ENCODE measurements at regions of chr3 and their contacts with region 1.

Region 1: DNA sequence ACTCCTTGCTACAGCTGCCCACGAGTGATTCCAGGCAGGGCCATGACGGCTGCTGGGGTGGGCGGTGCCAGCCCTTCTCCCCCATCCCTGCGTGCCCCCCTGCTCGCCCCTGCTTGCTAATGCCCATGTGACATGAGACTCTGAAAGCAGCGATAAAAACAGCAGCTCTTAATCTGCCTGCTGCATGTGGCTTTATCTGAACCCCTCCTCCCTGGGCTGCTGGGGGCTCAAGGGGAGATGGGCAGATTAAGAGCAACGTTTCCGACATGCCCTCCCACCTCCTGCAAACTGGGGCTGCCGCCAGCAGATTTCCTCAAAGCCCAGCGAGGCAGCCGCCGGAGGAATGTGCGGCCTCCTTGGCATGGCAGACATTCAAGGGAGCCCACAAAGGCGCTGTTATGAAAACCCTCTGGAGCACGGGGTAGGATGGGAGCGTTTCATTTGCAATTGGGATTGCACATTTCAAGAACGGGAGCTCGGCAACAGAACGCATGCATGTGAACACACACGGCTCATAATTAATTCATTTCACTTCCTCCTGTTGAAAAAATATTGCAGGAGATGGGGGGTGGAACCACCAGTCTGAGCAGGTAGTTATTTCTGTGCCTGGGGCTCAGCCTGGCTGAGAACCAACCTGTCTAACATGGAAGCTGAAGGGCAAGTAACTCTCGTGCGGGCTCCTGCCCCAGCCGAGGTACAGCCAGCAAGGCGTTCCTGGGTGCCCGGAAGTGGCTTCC is 504.2 kb upstream of the PROK2 start:
- DNase-seq: peak in 8 of 10 donors; percentile 6 to 39 (median 25)
- ATAC-seq: peak; percentile 71 to 72
- H3K4me3 Mint-ChIP-seq: peak overlapping the region; percentile 81 to 91 (median 88)
- H3K27ac Mint-ChIP-seq: peak overlapping the region in 9 of 10 donors; percentile 17 to 84 (median 75)
- H3K4me1 Mint-ChIP-seq: peaks cover 13 to 22% (median 18%) of the 10 kb centered on the region in 4 donors
- H3K27me3 Mint-ChIP-seq: peaks cover 0 to 9% (median 0%) of the 10 kb centered on the region in 5 donors

Region 2: DNA sequence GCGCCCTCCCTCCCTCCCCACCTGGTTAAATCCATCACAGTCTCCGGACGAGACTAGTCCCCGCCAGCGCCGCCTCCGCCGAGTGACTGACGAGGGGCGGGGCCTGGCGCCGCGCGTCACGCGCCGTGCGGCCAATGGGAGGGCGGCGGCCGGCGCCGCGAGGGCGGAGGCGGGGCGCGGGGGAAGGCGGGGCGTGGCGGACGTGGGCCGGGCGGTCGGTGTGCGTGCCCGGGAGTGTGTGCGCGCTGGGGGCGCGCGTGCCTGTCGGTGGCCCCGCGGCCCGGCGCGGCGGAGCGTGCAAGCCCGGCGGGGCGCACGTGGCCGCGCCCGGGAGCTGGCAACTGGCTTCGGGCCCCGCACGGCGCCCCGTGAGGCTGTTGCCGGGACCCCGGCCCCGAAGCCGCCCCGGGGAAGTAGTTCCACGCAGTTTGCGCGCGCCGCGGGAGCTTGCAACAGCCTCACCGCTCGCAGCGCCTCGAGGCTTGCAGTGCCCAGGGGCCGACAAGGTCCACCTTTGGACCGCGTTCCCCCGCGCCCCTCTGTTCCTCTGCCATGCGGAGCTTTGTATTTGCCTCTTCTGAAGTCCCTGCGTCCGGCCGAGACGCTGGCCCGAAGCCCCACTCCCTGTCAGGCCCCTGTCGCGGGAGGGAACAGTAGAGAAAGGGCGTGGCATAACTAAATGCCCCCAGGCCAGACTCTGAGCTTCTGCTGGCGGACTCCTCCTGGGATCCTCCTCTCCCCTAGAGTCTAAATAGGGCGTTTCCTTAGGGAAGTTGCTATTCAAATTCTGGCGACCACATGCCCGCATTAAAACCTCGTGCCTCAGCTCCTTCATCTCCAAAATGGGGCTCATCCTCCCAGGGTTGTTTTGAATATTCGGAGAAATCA is 158.2 kb after region 1 on chr3:
- POLR2A ChIA-PET with region 1: interaction called, 10 read pairs
- DNase-seq: peak; percentile 88 to 98 (median 94)
- ATAC-seq: peak; percentile 85 to 89
- H3K4me3 Mint-ChIP-seq: peak overlapping the region; percentile 68 to 96 (median 76)
- H3K27ac Mint-ChIP-seq: peak overlapping the region in 9 of 10 donors; percentile 25 to 81 (median 68)
- H3K4me1 Mint-ChIP-seq: peaks cover 35 to 42% (median 38%) of the 10 kb centered on the region in 4 donors
- H3K27me3 Mint-ChIP-seq: peaks cover 0 to 7% (median 0%) of the 10 kb centered on the region in 5 donors